ENCODE measurements at regions of chr2 and their contacts with region 1.

Region 1: DNA sequence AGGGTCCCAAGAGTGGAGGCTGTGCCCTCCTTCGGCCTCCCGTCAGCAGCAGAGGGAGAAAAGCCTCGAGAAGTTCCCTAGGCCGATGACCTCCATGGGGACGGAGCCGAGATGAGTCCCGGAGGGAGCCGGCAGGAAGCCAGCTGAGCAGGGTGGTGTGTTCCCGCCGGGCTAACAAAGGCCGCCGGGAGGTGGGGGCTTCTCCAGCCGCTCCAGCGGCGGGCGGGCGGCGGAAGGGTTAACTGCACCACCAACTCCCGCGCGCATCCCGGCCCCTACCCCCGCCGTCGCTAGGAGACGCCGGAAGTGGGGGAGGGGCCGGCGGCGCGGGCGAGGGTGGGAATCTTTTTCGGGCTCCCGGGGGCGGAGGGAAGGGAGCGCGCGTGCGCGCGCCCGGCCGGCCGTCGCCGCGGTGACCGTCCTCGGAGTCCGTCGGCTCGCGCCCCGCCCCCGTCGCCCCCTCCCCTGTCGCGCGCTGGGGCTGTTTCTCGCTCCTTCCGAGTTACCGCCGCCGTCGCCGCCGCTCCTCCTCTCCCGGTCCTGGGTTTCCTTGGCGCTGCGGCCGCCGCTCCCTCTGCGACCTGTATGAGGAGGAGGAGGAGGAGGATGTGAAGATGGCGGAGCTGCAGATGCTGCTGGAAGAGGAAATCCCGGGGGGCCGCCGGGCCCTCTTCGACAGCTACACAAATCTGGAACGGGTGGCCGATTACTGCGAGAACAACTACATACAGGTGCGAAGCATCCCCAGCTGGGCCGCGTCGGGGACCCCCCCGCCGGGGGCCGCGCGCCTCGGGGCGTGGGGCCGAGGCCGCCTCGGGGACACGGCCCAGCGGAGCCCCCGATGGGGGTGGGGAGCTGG is at the start of gene ABI2:
- DNase-seq: peak; percentile 12 to 87
- H3K4me3 ChIP-seq: peak within 1 kb of the TSS; percentile 83 to 86
- H3K27ac ChIP-seq: peak within 1 kb of the TSS; percentile 87 to 90
- H3K4me1 ChIP-seq: peaks cover 0 to 9% of the 10 kb centered on the region in 2 donors
- H3K27me3 ChIP-seq: no peaks in the 10 kb centered on the region
- CTCF ChIP-seq: no peak
- total RNA-seq, gene ABI2: 69.1 TPM

Region 2: DNA sequence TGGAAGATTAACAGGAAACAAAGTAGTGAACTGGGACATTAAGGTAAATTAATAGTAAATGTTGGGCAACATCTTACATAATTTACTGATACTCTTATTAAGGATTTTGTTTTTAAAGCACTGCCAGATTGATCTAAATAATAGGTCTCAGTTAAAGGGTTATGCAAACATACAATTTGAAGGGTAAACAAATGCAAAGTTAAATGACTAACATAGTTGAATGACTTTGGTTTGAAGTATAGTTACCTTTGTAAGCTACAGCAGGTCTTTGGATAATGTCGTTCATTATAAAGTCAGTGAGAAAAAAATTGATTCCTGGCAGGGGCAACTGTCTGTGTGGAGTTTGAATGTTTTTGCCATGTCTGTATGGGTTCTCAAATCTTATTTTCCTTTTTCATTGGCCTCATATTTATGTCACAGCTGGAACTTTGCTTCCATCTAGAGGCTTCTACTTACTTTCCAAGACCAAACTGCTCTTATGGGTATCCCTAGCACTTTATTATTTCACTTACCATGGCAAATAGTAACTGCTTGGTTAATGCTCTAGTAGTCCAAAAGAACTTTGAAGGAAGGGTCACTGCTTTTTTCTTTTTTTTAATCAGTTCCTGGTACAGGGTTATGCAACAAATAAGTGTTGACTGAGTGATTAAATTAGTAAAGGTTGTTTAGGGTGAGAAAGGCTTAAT is 205.7 kb before region 1 on chr2:
- intact Hi-C with region 1: no loop called
- DNase-seq: no peak
- H3K4me3 ChIP-seq: no peak overlapping the region
- H3K27ac ChIP-seq: no peak overlapping the region
- H3K4me1 ChIP-seq: no peaks in the 10 kb centered on the region
- H3K27me3 ChIP-seq: no peaks in the 10 kb centered on the region
- CTCF ChIP-seq: peak in 1 of 3 experiments; percentile 40

Region 3: DNA sequence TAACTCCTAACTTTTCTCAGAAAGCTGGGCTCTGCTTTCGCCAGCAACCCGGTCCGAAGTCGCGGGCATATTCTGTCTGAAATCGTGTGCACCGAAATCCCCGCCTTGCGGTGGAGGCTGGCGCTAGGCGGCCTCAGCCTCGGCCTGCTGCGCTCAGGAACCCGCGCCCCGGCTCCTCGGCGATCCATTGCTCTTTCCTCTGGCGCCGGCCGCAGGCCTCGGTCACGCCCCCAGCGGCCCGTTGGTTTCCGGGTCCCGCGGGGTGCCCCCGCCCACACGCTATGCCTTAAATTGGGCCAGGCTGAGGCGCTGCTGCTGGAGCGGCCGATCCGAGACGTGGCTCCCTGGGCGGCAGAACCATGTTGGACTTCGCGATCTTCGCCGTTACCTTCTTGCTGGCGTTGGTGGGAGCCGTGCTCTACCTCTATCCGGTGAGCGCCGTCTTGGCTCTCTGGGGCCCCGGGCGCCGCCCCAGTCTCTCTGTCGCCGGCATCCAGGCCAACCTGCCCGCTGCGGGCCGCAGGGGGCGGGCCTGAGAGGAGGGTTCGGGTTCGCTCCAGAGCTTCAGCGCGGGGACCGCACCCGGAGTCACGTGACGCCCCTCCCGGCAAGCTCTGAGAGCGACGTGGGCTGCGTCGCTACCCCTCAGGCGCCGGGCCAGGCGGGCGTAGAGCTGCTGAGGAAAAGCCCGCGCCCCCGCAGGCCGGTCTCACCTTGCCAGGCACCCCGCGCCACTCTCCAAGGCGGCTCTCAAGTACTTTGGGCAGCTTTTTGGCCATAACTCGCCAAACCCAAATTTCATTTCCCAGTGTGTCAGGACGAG is 89.2 kb before region 1 on chr2 and contains the start of gene CYP20A1:
- intact Hi-C with region 1: loop called (anchors 2 kb)
- DNase-seq: peak; percentile 82 to 98
- H3K4me3 ChIP-seq: peak within 1 kb of the TSS; percentile 51 to 72
- H3K27ac ChIP-seq: peak within 1 kb of the TSS; percentile 94 to 96
- H3K4me1 ChIP-seq: peaks cover 0 to 16% of the 10 kb centered on the region in 2 donors
- H3K27me3 ChIP-seq: no peaks in the 10 kb centered on the region
- CTCF ChIP-seq: peak in 2 of 3 experiments; percentile 21 to 40
- total RNA-seq, gene CYP20A1: 13.6 TPM

Region 4: DNA sequence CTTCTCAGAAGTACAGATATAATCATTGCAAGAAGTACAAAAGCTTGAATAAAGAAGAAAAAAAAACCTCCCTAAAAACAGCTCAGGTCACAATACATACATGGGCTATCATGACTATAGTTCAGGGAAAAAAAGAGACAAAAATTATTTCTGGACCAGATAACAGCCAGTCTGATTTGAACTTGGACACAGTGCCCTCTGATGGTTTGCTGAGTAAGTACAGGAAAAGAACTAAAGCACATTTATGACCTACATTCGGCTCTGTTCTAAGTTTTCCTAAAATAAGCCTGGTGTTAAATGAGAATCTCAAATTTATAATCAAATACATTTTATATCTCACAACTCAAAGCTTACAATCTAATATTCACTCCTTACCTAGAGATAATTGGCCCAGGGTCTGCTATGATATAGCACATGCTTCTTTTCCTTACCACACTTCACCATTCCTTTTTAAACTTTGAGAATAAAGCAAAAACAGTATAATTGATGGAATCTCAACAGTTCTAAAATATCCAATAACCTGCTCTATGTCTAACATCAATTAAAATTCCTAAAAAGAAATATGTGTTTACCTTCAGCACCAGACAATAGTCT is 125.8 kb after region 1 on chr2:
- intact Hi-C with region 1: loop called (anchors 5 kb)
- DNase-seq: no peak
- H3K4me3 ChIP-seq: no peak overlapping the region
- H3K27ac ChIP-seq: no peak overlapping the region
- H3K4me1 ChIP-seq: peaks cover 0 to 2% of the 10 kb centered on the region in 2 donors
- H3K27me3 ChIP-seq: no peaks in the 10 kb centered on the region
- CTCF ChIP-seq: peak; percentile 54 to 78 (median 59)

Measured in ascending aorta (tissue), 2 donors.